ENCODE measurements at regions of chr2 and their contacts with region 1.

Region 1: DNA sequence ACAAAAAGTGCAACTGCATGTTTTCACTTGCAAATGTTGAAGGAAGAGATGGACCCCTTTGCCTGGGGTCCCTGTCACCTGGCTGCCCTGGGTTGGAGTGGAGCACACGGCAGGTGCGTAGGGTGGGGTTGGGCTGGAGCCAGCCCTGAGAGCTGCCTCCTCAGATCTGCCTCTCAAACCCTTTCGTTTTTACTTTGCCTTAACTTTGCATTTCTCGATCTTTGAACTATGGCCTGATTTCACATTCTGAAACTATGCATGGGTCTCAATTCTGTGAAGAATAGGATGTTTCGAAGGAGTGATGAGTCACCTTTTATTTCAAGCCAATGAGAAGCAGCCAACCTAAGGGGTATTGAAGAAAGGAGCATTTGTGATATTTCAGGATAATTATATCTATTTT is 132.8 kb downstream of the ACOXL start:
- DNase-seq: peak; percentile 82
- H3K4me3 Mint-ChIP-seq: peak overlapping the region; percentile 47
- H3K27ac Mint-ChIP-seq: peak overlapping the region; percentile 43
- H3K4me1 Mint-ChIP-seq: peaks cover 66% of the 10 kb centered on the region
- H3K27me3 Mint-ChIP-seq: peaks cover 32% of the 10 kb centered on the region

Region 2: GRCh38 chr2:110650346-110650745 is 214.8 kb before region 1 on chr2:
- intact Hi-C with region 1: no loop called
- DNase-seq: no peak
- H3K4me3 Mint-ChIP-seq: no peak overlapping the region
- H3K27ac Mint-ChIP-seq: no peak overlapping the region
- H3K4me1 Mint-ChIP-seq: peaks cover 9% of the 10 kb centered on the region
- H3K27me3 Mint-ChIP-seq: no peaks in the 10 kb centered on the region

Region 3: GRCh38 chr2:110662560-110662959 is 202.6 kb before region 1 on chr2:
- intact Hi-C with region 1: no loop called
- DNase-seq: no peak
- H3K4me3 Mint-ChIP-seq: no peak overlapping the region
- H3K27ac Mint-ChIP-seq: no peak overlapping the region
- H3K4me1 Mint-ChIP-seq: peaks cover 15% of the 10 kb centered on the region
- H3K27me3 Mint-ChIP-seq: no peaks in the 10 kb centered on the region

Region 4: DNA sequence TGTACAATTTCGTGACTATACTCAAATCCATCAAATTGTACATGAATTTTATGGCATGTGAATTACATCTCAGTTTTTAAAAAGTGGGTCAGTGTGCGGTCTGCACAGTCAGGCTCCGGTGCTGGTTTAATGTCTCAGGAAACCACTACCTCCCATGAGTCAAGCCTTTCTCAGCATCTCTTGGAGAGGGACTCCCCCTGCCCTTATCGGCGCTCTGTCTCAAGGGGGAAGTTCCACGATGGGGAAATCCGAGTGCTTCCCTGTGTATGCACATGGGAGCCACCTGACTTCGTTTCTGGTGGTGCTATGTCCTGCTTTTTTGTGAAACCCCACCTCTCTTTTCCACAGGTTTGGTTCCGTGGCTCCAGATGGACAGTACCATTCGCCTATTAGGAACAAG is 60.3 kb before region 1 on chr2:
- intact Hi-C with region 1: loop called (anchors 2 kb)
- DNase-seq: peak; percentile 82
- H3K4me3 Mint-ChIP-seq: peak overlapping the region; percentile 12
- H3K27ac Mint-ChIP-seq: peak overlapping the region; percentile 18
- H3K4me1 Mint-ChIP-seq: peaks cover 17% of the 10 kb centered on the region
- H3K27me3 Mint-ChIP-seq: peaks cover 55% of the 10 kb centered on the region

Region 5: DNA sequence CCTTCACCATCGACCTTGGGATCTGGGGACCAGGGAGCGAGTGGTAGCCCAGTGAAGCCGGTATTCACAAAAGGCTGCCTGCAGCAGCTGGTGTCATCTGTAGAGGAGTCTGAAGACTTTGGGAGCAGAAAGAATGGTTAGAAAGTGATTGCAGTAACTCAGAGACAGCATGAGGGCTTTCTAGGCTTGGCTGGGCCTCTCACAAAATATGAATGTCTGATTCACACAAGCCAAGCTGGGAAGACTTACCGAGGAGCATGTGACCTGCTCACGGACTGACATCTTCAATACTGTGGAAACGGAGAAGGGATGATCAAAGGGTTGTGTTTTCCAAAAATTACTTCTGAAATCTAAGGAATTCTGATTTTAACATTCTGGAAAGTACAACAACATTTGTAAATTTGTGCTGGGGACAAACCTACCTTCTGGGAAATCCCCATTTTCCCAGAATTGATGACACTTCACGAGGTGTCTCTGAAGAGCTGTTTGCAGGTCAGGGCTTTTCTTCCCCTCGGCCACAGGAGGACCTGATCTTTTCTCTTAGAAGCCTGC is 21.2 kb before region 1 on chr2:
- intact Hi-C with region 1: loop called (anchors 1 kb)
- DNase-seq: no peak
- H3K4me3 Mint-ChIP-seq: peak overlapping the region; percentile 4
- H3K27ac Mint-ChIP-seq: peak overlapping the region; percentile 81
- H3K4me1 Mint-ChIP-seq: peaks cover 52% of the 10 kb centered on the region
- H3K27me3 Mint-ChIP-seq: peaks cover 21% of the 10 kb centered on the region

Region 6: DNA sequence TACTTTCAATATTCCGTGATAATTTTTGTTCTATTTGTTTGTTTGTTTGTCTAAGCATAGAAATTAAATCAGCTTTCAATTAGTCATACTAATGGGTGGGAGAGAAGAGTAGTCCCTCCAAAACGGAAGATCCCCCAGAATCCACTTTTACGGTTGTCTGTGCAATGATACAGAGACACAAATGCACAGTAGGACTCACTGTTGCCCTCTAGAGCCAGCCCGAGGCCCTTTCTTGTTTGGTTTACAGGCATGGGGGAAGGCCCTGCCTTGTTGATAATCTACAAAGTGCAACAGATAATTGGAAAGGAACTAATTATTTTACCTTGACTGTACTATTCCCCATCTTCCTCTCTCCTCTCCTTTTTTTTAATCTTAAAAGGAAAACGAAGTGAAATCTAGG is 11.7 kb before region 1 on chr2:
- intact Hi-C with region 1: loop called (anchors 1 kb)
- DNase-seq: peak; percentile 84
- H3K4me3 Mint-ChIP-seq: no peak overlapping the region
- H3K27ac Mint-ChIP-seq: peak overlapping the region; percentile 64
- H3K4me1 Mint-ChIP-seq: peaks cover 67% of the 10 kb centered on the region
- H3K27me3 Mint-ChIP-seq: peaks cover 31% of the 10 kb centered on the region

Region 7: GRCh38 chr2:110881908-110882307 is 16.7 kb after region 1 on chr2:
- intact Hi-C with region 1: loop called (anchors 2 kb)
- DNase-seq: peak; percentile 58
- H3K4me3 Mint-ChIP-seq: no peak overlapping the region
- H3K27ac Mint-ChIP-seq: no peak overlapping the region
- H3K4me1 Mint-ChIP-seq: peaks cover 11% of the 10 kb centered on the region
- H3K27me3 Mint-ChIP-seq: peaks cover 49% of the 10 kb centered on the region

Region 8: DNA sequence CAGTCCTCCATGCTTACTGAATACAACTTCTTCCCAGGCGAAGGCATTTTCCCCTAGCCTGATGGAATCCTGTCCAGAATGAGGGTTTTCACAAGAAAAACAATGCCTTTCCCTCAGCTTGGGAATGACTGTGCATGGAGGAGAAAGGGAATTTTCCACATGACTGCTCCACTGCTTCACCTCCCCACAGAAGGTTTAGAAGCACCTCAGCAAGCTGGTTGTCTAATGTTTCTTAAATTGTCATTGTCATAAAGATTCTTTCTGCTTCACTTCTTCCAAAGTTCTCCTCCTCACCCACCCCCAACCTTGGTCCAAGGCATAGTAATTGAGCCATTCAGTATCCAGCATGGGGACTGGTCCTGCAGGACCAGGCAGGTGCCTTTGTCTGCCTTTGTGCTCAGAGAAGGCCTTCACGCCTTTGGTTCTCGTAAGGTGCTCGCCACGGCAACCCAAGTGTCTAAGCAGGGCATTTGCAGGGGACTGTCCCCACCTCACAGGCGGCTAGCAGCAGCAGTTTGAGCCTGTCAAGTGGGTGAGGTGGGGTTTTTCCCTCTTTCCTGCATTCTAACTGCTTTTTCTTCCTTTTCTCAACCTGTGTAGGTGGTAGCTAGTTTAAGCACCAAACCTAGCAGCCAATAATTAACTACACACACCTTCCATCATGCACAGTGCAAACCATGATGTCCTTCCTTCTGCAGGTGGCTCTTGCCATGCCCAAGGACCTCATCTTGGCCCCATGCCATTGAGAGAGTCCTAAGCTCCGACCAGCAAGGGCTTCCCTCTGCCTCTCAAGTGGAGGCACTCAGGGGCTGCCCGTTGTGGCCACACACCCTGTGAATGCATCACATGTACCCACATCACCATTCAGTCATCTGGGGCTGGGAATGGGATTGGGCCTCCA is 189.9 kb after region 1 on chr2:
- intact Hi-C with region 1: loop called (anchors 2 kb)
- DNase-seq: peak; percentile 61
- H3K4me3 Mint-ChIP-seq: peak overlapping the region; percentile 50
- H3K27ac Mint-ChIP-seq: peak overlapping the region; percentile 71
- H3K4me1 Mint-ChIP-seq: peaks cover 30% of the 10 kb centered on the region
- H3K27me3 Mint-ChIP-seq: peaks cover 41% of the 10 kb centered on the region

Measured in activated CD4-positive, alpha-beta T cell treated with anti-CD3 and anti-CD28 coated beads, Interleukin-2, amount 10 ng/mL, durations not matched to agents 24 days and 14 days (primary cell).